Caco-2 (cell line): ENCODE measurements at regions of chr6 and their contacts with region 1.

Region 1: GRCh38 chr6:12228447-12229146 is 61.6 kb upstream of the EDN1 start:
- DNase-seq: peak; percentile 7 to 47
- H3K4me3 ChIP-seq: peak overlapping the region; percentile 8; the same call in 1 of the 2 replicates
- H3K4me3 Mint-ChIP-seq: peak overlapping the region; percentile 65
- H3K27ac Mint-ChIP-seq: peak overlapping the region; percentile 46
- H3K4me1 ChIP-seq: peaks cover 22% of the 10 kb centered on the region
- H3K4me1 Mint-ChIP-seq: peaks cover 16% of the 10 kb centered on the region
- H3K27me3 ChIP-seq: no peaks in the 10 kb centered on the region
- H3K27me3 Mint-ChIP-seq: no peaks in the 10 kb centered on the region
- CTCF ChIP-seq: no peak

Region 2: GRCh38 chr6:12189661-12190060 is 38.9 kb before region 1 on chr6:
- CTCF ChIA-PET with region 1: no interaction called
- POLR2A ChIA-PET with region 1: no interaction called
- intact Hi-C with region 1: loop called (anchors 5 kb)
- DNase-seq: no peak
- H3K4me3 ChIP-seq: no peak overlapping the region
- H3K4me3 Mint-ChIP-seq: no peak overlapping the region
- H3K27ac Mint-ChIP-seq: no peak overlapping the region
- H3K4me1 ChIP-seq: no peaks in the 10 kb centered on the region
- H3K4me1 Mint-ChIP-seq: no peaks in the 10 kb centered on the region
- H3K27me3 ChIP-seq: no peaks in the 10 kb centered on the region
- H3K27me3 Mint-ChIP-seq: no peaks in the 10 kb centered on the region
- CTCF ChIP-seq: no peak

Region 3: DNA sequence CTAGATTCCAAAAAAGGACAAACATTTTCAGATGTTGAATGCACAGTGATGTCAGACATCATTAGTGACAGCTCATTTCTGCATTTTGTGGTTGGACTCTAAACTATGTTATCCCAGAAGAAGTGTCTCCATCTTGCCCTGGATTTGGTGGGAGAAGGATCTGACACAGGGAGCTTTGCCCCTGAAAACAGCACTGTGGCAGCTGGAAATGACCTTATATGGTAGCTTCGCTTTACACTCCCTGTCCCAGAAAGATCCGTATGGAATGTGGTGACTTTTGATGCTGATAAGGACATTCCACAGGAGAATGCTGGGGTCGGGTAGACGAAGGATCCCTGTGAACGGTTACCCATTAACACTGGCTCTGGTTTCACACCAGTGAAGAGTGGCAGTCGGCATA is 25.6 kb before region 1 on chr6:
- CTCF ChIA-PET with region 1: interaction called, 9 read pairs
- POLR2A ChIA-PET with region 1: interaction called, 3 read pairs
- intact Hi-C with region 1: loop called (anchors 1 kb)
- DNase-seq: peak; percentile 81 to 93
- H3K4me3 ChIP-seq: no peak overlapping the region
- H3K4me3 Mint-ChIP-seq: peak overlapping the region; percentile 42
- H3K27ac Mint-ChIP-seq: peak overlapping the region; percentile 95
- H3K4me1 ChIP-seq: peaks cover 22% of the 10 kb centered on the region
- H3K4me1 Mint-ChIP-seq: peaks cover 8% of the 10 kb centered on the region
- H3K27me3 ChIP-seq: no peaks in the 10 kb centered on the region
- H3K27me3 Mint-ChIP-seq: no peaks in the 10 kb centered on the region
- CTCF ChIP-seq: no peak